Activated naive CD4-positive, alpha-beta T cell treated with anti-CD3 and anti-CD28 coated beads for 36 hours (primary cell): ENCODE measurements at regions of chr5 and their contacts with region 1.

Region 1: GRCh38 chr5:75511435-75512384 is at the starts of genes CERT1 and POLK:
- DNase-seq: peak; percentile 99
- H3K4me3 Mint-ChIP-seq: peak within 1 kb of the TSS; percentile 96
- H3K27ac Mint-ChIP-seq: peak within 1 kb of the TSS; percentile 89
- H3K4me1 Mint-ChIP-seq: peaks cover 53% of the 10 kb centered on the region
- H3K27me3 Mint-ChIP-seq: no peaks in the 10 kb centered on the region
- total RNA-seq, gene CERT1: 17.1 to 18.5 TPM
- total RNA-seq, gene POLK: 26.8 to 29.0 TPM

Region 2: DNA sequence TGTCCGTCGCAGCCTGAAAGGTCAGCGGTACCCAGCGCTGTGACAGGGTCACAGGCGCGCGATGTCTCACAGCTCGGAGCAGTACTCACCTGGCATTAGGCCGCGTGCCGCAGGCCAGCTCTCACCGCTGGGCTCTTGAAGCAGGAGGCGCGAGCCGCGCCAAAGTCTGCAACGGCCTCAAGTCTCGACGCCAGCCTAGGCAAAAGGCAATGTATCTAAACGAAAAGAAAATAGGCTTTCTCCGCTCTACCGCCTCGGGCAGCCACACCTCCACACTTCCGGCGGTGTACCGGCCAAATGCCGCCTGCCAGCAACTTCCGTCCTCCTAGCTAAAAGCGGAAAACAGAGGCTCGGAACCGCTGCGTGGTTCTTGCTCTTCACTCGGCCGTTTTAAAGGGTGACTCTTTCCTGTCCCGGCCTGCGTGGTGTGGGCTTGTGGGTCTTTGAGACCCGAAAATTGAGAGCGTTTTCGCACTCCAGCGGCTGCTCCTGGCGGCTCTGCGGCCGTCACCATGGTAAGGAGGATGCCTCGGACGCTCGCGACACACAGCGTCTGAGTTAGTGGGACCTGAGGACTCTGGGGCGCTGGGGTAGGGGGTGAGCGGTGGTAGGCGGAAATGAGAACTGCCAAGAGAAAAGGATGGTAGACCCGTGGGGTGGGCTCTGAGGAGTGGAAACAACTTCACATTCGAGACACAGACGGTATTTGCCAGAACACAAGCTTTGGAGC is 744.7 kb before region 1 on chr5 and contains the starts of genes GFM2 and NSA2:
- CTCF ChIA-PET with region 1: no interaction called
- intact Hi-C with region 1: loop called (anchors 5 kb)
- DNase-seq: peak; percentile 96
- H3K4me3 Mint-ChIP-seq: peak within 1 kb of the TSS; percentile 99
- H3K27ac Mint-ChIP-seq: peak within 1 kb of the TSS; percentile 93
- H3K4me1 Mint-ChIP-seq: peaks cover 39% of the 10 kb centered on the region
- H3K27me3 Mint-ChIP-seq: no peaks in the 10 kb centered on the region
- total RNA-seq, gene GFM2: 27.7 to 28.0 TPM
- total RNA-seq, gene NSA2: 119 to 121 TPM

Region 3: DNA sequence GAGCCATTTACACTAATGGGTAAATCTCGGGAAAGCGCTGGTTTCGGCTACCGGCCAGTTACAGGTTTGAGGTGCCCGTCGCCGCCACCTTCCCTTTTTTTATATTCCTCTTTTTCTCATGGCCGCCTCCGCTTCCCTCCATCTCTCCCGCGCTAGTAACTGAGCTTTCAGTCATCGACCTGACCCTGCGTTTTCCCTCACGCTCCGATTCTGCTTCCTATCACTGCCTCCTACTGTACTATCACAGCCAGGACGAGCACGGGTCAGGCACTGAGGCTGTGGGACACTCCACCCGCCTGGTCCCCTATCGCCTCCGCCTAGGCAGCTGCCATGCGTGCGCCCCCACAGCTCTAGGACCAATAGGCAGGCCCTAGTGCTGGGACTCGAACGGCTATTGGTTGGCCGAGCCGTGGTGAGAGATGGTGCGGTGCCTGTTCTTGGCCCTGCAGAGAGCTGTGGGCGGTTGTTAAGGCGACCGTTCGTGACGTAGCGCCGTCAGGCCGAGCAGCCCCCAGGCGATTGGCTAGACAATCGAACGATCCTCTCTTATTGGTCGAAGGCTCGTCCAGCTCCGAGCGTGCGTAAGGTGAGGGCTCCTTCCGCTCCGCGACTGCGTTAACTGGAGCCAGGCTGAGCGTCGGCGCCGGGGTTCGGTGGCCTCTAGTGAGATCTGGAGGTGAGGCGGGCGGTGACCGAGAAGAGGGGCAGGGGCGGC is 174.9 kb before region 1 on chr5 and contains the start of gene HMGCR:
- CTCF ChIA-PET with region 1: no interaction called
- intact Hi-C with region 1: loop called (anchors 1 kb)
- DNase-seq: peak; percentile 99
- H3K4me3 Mint-ChIP-seq: no peak within 1 kb of the TSS
- H3K27ac Mint-ChIP-seq: no peak within 1 kb of the TSS
- H3K4me1 Mint-ChIP-seq: peaks cover 35% of the 10 kb centered on the region
- H3K27me3 Mint-ChIP-seq: no peaks in the 10 kb centered on the region
- total RNA-seq, gene HMGCR: 61.7 to 67.5 TPM

Region 4: DNA sequence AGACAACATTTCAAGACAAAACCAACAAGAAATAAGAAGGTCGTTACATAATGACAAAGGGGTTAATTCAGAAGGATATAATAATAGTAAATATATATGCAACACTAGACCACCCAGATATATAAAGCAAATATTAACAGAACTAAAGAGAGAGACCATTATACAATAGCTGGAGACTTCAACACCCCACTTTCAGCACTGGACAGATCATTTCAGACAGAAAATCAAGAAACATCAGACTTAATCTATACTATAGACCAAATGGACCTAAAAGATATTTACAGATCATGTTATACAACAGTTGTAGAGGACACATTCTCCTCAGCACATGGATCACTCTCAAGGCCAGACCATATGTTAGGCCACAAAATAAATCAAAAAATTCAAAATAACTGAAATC is 27.1 kb before region 1 on chr5:
- CTCF ChIA-PET with region 1: no interaction called
- intact Hi-C with region 1: no loop called
- DNase-seq: no peak
- H3K4me3 Mint-ChIP-seq: no peak overlapping the region
- H3K27ac Mint-ChIP-seq: no peak overlapping the region
- H3K4me1 Mint-ChIP-seq: peaks cover 23% of the 10 kb centered on the region
- H3K27me3 Mint-ChIP-seq: no peaks in the 10 kb centered on the region

Region 5: DNA sequence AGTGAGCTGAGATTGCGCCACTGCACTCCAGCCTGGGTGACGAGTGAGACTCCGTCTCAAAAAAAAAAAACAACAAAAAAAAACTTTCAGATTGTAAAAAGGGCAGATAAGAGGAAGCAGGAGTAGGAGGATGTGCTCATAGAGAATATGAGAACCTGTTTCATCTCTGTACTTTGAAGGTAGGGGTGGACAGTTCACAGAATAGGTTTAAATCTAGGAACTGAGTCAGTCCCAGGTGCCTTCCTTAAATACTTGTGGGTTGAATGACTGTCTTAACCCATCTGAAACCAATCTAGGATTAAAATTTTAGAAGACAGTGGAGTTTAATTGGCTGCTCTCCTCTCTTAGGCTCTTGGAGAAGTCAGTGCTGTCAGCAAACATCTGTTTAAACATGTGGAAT is 12.4 kb after region 1 on chr5:
- CTCF ChIA-PET with region 1: interaction called, 3 read pairs
- intact Hi-C with region 1: loop called (anchors 1 kb)
- DNase-seq: peak; percentile 30
- H3K4me3 Mint-ChIP-seq: peak overlapping the region; percentile 12
- H3K27ac Mint-ChIP-seq: peak overlapping the region; percentile 72
- H3K4me1 Mint-ChIP-seq: peaks cover 61% of the 10 kb centered on the region
- H3K27me3 Mint-ChIP-seq: no peaks in the 10 kb centered on the region

Region 6: DNA sequence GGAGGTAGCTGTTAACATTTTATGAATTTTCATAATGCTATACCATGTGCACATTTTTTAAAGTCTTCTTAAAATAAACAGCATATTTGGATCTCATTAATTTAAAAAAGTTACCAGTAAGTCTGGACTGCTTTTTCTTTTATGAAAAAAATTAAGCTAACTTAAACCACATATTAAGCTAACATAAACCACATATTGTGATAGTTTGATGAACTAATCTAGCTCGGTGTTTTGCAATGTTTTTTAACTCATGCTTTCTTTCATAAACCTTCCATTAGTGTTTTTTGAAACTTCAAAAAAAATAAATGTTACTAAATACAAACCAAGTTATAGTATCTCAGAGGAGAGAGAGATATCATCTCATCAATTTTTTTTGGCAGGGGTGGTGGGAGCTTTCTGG is 26.5 kb after region 1 on chr5:
- CTCF ChIA-PET with region 1: no interaction called
- intact Hi-C with region 1: no loop called
- DNase-seq: no peak
- H3K4me3 Mint-ChIP-seq: no peak overlapping the region
- H3K27ac Mint-ChIP-seq: no peak overlapping the region
- H3K4me1 Mint-ChIP-seq: peaks cover 13% of the 10 kb centered on the region
- H3K27me3 Mint-ChIP-seq: no peaks in the 10 kb centered on the region

Region 7: GRCh38 chr5:75551471-75551870 is 39.8 kb after region 1 on chr5:
- CTCF ChIA-PET with region 1: no interaction called
- intact Hi-C with region 1: no loop called
- DNase-seq: no peak
- H3K4me3 Mint-ChIP-seq: no peak overlapping the region
- H3K27ac Mint-ChIP-seq: no peak overlapping the region
- H3K4me1 Mint-ChIP-seq: peaks cover 4% of the 10 kb centered on the region
- H3K27me3 Mint-ChIP-seq: no peaks in the 10 kb centered on the region

Region 8: DNA sequence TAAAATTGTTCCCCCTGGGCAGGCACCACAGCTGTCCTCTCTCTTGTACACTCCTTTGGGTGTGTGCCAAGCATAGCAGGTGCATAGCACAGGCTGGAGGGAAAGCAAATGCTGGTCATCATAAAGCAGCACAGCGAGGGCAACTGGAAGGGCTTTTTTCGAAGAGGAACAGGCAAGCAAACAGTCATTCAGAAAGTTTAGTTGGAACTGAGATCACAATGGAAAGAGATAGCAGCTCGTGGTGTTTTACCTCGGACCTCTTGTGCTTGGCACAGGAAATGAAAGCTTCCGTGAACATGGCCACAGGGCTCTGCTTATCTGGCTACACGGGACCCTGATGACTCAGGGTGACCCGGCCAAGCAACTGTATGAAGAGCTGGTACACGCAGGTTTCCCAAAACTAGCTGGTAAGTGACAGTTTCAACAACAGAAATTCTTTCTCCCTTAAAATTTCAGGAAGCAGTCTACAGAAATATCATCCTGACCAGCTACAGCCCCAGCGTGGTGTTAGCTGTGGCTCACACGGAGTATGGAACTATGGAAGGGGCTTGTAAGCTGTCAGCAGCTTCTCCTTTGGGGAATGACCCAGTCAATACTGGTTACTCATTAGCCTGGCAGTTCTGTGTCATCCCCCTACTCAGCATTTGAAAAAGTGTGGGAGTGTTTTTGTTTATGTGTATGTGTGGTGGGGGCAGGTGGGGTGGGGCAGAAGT is 157.4 kb after region 1 on chr5:
- CTCF ChIA-PET with region 1: no interaction called
- intact Hi-C with region 1: loop called (anchors 2 kb)
- DNase-seq: peak; percentile 82
- H3K4me3 Mint-ChIP-seq: peak overlapping the region; percentile 49
- H3K27ac Mint-ChIP-seq: peak overlapping the region; percentile 70
- H3K4me1 Mint-ChIP-seq: peaks cover 30% of the 10 kb centered on the region
- H3K27me3 Mint-ChIP-seq: no peaks in the 10 kb centered on the region

Region 9: GRCh38 chr5:76473661-76474060 is 962.0 kb after region 1 on chr5:
- CTCF ChIA-PET with region 1: no interaction called
- intact Hi-C with region 1: loop called (anchors 5 kb)
- DNase-seq: peak; percentile 90
- H3K4me3 Mint-ChIP-seq: peak overlapping the region; percentile 38
- H3K27ac Mint-ChIP-seq: peak overlapping the region; percentile 92
- H3K4me1 Mint-ChIP-seq: peaks cover 76% of the 10 kb centered on the region
- H3K27me3 Mint-ChIP-seq: no peaks in the 10 kb centered on the region